A673 (cell line): ENCODE measurements at regions of chr4 and their contacts with region 1.

Region 1: GRCh38 chr4:110310795-110311194 is 112.4 kb upstream of the ELOVL6 start:
- DNase-seq: no peak
- H3K4me3 ChIP-seq: no peak overlapping the region
- H3K27ac ChIP-seq: no peak overlapping the region
- H3K4me1 ChIP-seq: peaks cover 32% of the 10 kb centered on the region
- H3K27me3 ChIP-seq: no peaks in the 10 kb centered on the region
- CTCF ChIP-seq: no peak

Region 2: GRCh38 chr4:110005461-110006056 is 305.2 kb before region 1 on chr4:
- CTCF ChIA-PET with region 1: no interaction called
- POLR2A ChIA-PET with region 1: no interaction called
- intact Hi-C with region 1: loop called (anchors 10 kb)
- DNase-seq: peak; percentile 84
- H3K4me3 ChIP-seq: no peak overlapping the region
- H3K27ac ChIP-seq: no peak overlapping the region
- H3K4me1 ChIP-seq: peaks cover 3% of the 10 kb centered on the region
- H3K27me3 ChIP-seq: no peaks in the 10 kb centered on the region
- CTCF ChIP-seq: peak; percentile 85